ENCODE measurements at regions of chr17 and their contacts with region 1.

Region 1: GRCh38 chr17:77374170-77374936 is 233.6 kb downstream of the SEC14L1 start:
- DNase-seq: peak; percentile 90
- H3K4me3 Mint-ChIP-seq: peak overlapping the region; percentile 100
- H3K27ac Mint-ChIP-seq: peak overlapping the region; percentile 97
- H3K4me1 Mint-ChIP-seq: peaks cover 72% of the 10 kb centered on the region
- H3K27me3 Mint-ChIP-seq: peaks cover 9% of the 10 kb centered on the region

Region 2: GRCh38 chr17:77391668-77392375 is 17.5 kb after region 1 on chr17:
- CTCF ChIA-PET with region 1: interaction called, 38 read pairs
- DNase-seq: peak; percentile 85
- H3K4me3 Mint-ChIP-seq: peak overlapping the region; percentile 79
- H3K27ac Mint-ChIP-seq: peak overlapping the region; percentile 95
- H3K4me1 Mint-ChIP-seq: peaks cover 91% of the 10 kb centered on the region
- H3K27me3 Mint-ChIP-seq: no peaks in the 10 kb centered on the region

Region 3: GRCh38 chr17:77409282-77410161 is 35.2 kb after region 1 on chr17:
- CTCF ChIA-PET with region 1: no interaction called
- DNase-seq: peak; percentile 56
- H3K4me3 Mint-ChIP-seq: peak overlapping the region; percentile 58
- H3K27ac Mint-ChIP-seq: peak overlapping the region; percentile 84
- H3K4me1 Mint-ChIP-seq: peaks cover 91% of the 10 kb centered on the region
- H3K27me3 Mint-ChIP-seq: no peaks in the 10 kb centered on the region

Region 4: DNA sequence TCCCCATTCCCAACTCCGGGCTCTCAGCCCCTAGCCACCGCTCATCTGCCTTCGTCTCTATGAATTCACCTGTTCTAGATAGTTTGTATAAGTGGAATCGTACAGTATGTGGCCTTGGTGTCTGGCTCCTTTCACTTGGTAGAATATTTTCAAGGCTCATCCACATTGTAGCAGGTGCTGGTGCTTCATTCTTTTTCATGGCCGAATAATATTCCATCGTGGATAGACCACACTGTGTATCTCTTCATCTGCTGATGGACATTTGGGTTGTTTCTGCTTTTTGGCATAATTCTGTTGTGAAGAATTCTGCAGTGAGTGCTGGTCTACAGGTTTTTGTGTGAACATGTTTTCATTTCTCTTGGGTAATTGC is 90.6 kb after region 1 on chr17:
- CTCF ChIA-PET with region 1: no interaction called
- DNase-seq: no peak
- H3K4me3 Mint-ChIP-seq: peak overlapping the region; percentile 64
- H3K27ac Mint-ChIP-seq: peak overlapping the region; percentile 91
- H3K4me1 Mint-ChIP-seq: peaks cover 91% of the 10 kb centered on the region
- H3K27me3 Mint-ChIP-seq: no peaks in the 10 kb centered on the region

Region 5: GRCh38 chr17:77581480-77581879 is 207.1 kb after region 1 on chr17:
- CTCF ChIA-PET with region 1: no interaction called
- DNase-seq: no peak
- H3K4me3 Mint-ChIP-seq: no peak overlapping the region
- H3K27ac Mint-ChIP-seq: no peak overlapping the region
- H3K4me1 Mint-ChIP-seq: peaks cover 15% of the 10 kb centered on the region
- H3K27me3 Mint-ChIP-seq: peaks cover 33% of the 10 kb centered on the region

Measured in activated naive CD4-positive, alpha-beta T cell treated with anti-CD3 and anti-CD28 coated beads, Interleukin-2, amount 10 ng/mL, durations not matched to agents 7 days and 5 days (primary cell).